ENCODE measurements at regions of chr14 and their contacts with region 1.

Region 1: DNA sequence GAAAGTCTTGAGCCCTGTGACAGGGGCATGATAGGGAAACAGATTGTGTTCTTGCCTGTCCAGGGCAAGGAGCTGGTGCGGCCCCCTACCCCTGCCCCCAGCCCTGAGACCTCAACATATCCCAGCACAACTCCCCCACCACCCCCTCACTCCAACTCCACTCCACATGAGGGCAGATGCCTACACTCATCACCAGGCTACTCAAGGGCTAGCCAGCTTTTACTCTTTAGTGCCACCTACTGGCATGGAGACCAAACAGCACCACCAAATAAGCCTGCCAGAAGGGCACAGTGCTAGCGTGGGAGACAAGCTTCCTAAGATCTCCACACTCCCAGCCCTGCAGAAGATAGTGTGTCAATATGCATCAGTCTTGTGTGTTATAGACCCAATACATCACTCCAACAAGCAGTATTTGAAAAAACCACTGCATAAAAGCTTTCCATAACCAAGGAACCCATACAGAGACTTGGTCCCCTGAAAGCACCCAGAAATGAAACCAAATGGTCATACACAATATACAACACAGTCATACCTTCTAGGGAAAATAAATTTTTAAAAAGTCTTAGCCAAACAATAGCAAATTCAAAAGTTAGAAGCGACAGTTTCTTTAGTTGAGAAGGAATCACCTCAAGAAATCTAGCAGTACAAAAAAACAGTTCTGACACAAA is 154.4 kb downstream of the KCNK10 start:
- DNase-seq: no peak
- ATAC-seq: peak; percentile 79

Region 2: DNA sequence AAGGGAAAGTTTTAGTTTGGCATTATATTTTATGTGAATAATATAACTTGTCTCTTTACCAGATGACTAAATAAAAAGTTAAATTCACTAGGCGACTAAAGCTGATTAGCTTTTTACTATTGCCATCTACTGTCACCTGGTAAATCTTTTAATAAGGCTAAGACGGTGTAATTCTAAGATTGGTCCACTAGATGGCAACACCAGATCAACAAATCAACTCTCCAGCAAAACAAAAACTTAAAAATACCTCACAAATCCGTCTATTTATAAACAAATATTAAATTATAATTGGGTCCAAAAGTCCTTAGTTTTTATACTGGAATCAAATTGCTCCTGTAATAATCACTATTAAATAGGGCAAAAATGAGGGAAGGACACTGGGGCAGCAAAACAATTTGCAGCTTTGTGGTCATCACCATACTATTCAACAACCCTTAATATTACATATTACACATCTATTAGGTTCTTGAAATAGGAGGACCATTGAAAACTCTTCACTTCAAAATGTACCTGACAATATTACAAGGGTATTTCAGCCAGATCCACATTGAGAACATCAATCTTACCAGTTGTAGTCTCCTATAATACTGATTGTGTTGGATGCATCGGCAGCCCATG is 223.5 kb before region 1 on chr14:
- intact Hi-C with region 1: loop called (anchors 10 kb)
- DNase-seq: no peak
- ATAC-seq: no peak

Region 3: GRCh38 chr14:88013750-88014349 is 154.8 kb before region 1 on chr14:
- intact Hi-C with region 1: loop called (anchors 5 kb)
- DNase-seq: peak; percentile 59
- ATAC-seq: peak; percentile 95

Region 4: GRCh38 chr14:88305528-88306322 is 137.1 kb after region 1 on chr14:
- intact Hi-C with region 1: no loop called
- DNase-seq: no peak
- ATAC-seq: no peak

Region 5: GRCh38 chr14:88522393-88522792 is 353.8 kb after region 1 on chr14:
- intact Hi-C with region 1: no loop called
- DNase-seq: no peak
- ATAC-seq: no peak